ENCODE measurements at regions of chr4 and their contacts with region 1.

Region 1: GRCh38 chr4:166174717-166175490 is 301.9 kb downstream of the TLL1 start:
- DNase-seq: no peak
- H3K4me3 ChIP-seq: no peak overlapping the region
- H3K27ac ChIP-seq: no peak overlapping the region
- H3K4me1 ChIP-seq: no peaks in the 10 kb centered on the region
- H3K27me3 ChIP-seq: no peaks in the 10 kb centered on the region
- CTCF ChIP-seq: no peak
- POLR2A ChIP-seq: no peak

Region 2: DNA sequence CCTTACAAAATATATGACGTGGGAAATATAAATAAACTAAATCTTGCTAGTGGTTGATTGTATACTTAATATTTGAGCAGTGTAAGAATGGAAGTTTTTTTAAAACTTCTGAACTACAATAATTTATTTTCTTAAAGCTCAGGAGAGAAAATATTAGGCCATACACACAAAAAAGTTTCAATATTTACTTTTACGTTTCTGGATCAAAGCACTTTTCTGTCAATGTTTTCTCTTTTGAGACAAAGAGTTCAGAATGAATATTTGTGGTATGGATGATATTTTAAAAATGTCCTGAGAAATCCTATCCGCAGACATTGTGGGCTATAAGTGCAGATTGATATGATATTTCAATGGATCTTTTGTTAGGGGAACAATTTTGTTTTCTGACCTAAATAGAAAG is 192.0 kb before region 1 on chr4:
- intact Hi-C with region 1: no loop called
- DNase-seq: no peak
- H3K4me3 ChIP-seq: no peak overlapping the region
- H3K27ac ChIP-seq: no peak overlapping the region
- H3K4me1 ChIP-seq: no peaks in the 10 kb centered on the region
- H3K27me3 ChIP-seq: no peaks in the 10 kb centered on the region
- CTCF ChIP-seq: no peak
- POLR2A ChIP-seq: no peak

Region 3: DNA sequence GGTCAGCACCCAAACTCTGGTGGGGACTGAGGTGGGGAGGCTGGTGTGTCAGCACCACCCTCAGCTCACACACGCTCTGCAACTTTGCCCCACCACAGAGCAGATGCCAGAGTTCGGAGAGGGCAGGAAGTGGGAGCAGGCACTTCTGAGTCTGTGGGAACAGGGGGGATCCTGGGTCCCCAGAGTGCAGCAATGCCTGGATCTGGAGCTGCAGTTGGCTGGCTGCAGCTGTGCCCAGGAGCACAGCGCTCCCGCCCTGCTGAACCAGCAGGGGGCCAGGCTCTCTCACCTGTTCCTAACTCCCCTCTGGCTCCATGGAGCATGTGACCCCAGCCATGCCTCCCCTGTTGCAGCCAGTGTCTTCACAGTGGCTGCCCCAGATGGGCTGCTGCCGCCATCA is 806.9 kb after region 1 on chr4:
- intact Hi-C with region 1: loop called (anchors 5 kb)
- DNase-seq: no peak
- H3K4me3 ChIP-seq: no peak overlapping the region
- H3K27ac ChIP-seq: no peak overlapping the region
- H3K4me1 ChIP-seq: no peaks in the 10 kb centered on the region
- H3K27me3 ChIP-seq: no peaks in the 10 kb centered on the region
- CTCF ChIP-seq: no peak
- POLR2A ChIP-seq: no peak